GM10248 (cell line): ENCODE measurements at regions of chr1 and their contacts with region 1.

Region 1: GRCh38 chr1:167401260-167401873 is 117.0 kb downstream of the CD247 start:
- DNase-seq: peak; percentile 46
- CTCF ChIP-seq: peak; percentile 53

Region 2: DNA sequence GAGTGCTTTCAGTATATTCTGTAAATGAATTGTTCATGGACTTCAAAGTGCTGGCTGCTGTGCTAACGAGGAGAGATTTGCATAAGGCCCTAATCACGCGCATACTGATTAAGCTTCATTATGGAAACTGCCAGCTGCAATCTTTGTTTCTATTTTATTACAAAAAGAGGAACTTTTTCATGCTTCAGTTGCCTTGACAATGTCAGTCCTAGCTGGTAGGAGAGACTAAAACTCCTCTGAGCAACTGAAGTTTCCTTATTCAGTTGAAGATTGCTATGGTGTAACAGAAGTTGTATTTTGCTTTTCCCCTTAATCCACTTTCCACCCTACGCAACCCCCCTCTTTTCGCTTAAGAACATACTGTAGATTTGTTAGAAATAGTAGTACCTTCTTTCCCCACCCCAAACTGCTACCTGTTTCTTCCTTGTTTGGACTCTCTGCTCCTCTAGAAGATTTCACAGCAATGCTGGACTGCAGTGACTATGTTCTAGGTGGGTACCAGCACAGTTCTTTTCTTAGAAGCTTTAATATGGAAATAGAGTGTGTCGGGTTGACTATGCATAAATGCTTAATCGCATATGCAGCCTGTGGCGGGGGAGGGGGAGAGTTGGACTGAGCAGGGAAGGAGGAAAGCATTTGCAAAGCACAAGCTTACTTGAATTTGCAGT is 72.4 kb before region 1 on chr1:
- CTCF ChIA-PET with region 1: no interaction called
- POLR2A ChIA-PET with region 1: no interaction called
- DNase-seq: peak; percentile 42
- CTCF ChIP-seq: no peak

Region 3: GRCh38 chr1:167373398-167373797 is 28.0 kb before region 1 on chr1:
- CTCF ChIA-PET with region 1: interaction called, 13 read pairs
- POLR2A ChIA-PET with region 1: no interaction called
- DNase-seq: no peak
- CTCF ChIP-seq: no peak

Region 4: GRCh38 chr1:167387251-167387910 is 14.0 kb before region 1 on chr1:
- CTCF ChIA-PET with region 1: interaction called, 17 read pairs
- POLR2A ChIA-PET with region 1: no interaction called
- DNase-seq: no peak
- CTCF ChIP-seq: no peak

Region 5: DNA sequence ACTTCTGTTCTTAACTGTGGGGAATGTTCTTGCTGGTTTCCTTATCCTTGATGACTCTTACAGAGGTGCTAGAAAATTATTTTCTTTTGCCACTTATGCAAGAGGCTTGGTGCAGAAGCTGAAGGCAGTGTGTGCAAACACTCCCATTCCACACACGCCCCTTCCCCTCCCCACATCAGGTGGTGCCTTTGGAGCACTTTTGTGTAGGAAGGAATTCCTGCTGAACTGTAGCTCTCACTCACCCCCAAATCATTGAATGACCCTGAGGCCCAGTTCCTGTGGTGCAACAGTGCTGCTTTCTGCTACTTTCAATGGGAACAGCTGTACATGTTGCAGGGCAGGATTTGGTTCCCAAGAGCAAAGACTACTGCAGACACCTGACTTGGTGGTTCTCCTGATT is 15.1 kb after region 1 on chr1:
- CTCF ChIA-PET with region 1: interaction called, 10 read pairs
- POLR2A ChIA-PET with region 1: no interaction called
- DNase-seq: no peak
- CTCF ChIP-seq: no peak